PC-9 (cell line): ENCODE measurements at regions of chr7 and their contacts with region 1.

Region 1: DNA sequence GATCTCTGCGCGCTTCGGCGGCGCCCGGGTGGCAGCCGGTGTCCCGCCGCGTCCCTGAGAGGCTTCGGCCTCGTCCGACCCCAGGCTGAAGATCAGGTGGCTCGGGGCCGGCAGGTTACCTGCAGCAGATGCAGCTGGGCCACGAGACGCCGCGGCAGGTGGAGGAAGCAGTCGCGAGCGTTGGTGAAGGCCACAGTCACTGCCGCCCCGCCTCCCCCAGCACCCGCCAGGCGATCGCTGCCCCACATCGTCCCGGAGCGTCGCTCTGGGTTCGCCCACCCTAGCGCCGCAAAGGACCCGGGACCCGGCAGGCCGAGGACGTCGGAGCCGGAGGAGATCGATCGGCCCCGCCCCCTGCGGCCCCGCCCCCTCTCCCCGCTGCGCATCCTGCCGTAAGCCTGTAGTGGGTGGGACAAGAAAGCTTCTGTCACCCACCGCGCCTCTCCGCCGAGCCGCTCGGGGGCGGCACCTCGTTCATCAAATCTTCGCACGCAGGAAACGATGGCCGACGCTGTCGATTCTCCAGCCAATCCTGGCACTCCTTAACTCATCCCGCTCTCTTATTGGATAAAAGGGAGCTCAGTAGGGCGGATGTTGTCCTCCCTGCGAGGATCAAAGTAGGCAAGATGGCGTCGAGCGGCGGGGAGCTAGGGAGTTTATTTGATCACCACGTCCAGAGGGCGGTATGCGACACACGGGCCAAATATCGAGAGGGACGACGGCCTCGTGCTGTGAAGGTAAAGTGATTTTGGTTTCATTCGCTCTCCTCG is at the starts of genes PEX1 and RBM48:
- DNase-seq: peak; percentile 97 to 99
- H3K4me3 ChIP-seq: peak within 1 kb of the TSS; percentile 95
- H3K27ac ChIP-seq: peak within 1 kb of the TSS; percentile 52
- H3K4me1 ChIP-seq: peaks cover 18% of the 10 kb centered on the region
- H3K27me3 ChIP-seq: no peaks in the 10 kb centered on the region
- CTCF ChIP-seq: peak; percentile 50
- total RNA-seq, gene PEX1: 13.4 and 20.2 TPM in 2 replicates
- total RNA-seq, gene RBM48: 7.4 and 11.5 TPM in 2 replicates

Region 2: DNA sequence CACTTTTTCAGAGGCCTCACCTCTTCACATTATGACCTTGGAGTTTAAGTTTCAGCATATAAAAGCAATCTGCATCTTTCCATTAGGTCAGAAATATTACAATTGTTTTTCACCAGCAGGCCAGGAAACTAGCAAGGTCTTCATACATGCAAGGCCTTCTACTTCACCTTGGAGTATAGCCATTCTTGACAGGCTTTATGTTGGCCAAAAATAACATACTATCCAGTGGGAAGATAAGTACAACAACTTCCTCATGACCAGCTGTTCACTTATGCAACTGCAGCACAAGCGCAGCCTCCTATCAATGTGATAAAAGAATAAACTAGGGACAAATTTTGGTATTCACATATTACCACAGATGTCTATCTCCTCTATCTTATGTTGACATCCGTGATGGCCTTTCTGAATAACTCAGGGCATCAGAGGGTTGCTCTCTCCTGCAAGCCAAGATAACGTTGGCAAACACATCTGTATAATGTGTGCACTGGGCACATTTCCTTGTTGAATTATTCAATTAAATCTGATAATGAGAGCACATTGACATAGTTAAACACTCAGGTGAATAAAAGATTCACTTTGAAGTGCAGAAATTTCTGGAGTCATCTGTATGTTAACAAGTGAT is 1024.3 kb before region 1 on chr7:
- CTCF ChIA-PET with region 1: no interaction called
- POLR2A ChIA-PET with region 1: interaction called, 11 read pairs
- intact Hi-C with region 1: no loop called
- DNase-seq: no peak
- H3K4me3 ChIP-seq: no peak overlapping the region
- H3K27ac ChIP-seq: no peak overlapping the region
- H3K4me1 ChIP-seq: no peaks in the 10 kb centered on the region
- H3K27me3 ChIP-seq: no peaks in the 10 kb centered on the region
- CTCF ChIP-seq: no peak

Region 3: GRCh38 chr7:91852263-91852741 is 676.1 kb before region 1 on chr7:
- CTCF ChIA-PET with region 1: no interaction called
- POLR2A ChIA-PET with region 1: no interaction called
- intact Hi-C with region 1: no loop called
- DNase-seq: peak in 1 of 2 experiments; percentile 41
- H3K4me3 ChIP-seq: no peak overlapping the region
- H3K27ac ChIP-seq: no peak overlapping the region
- H3K4me1 ChIP-seq: peaks cover 13% of the 10 kb centered on the region; the same call in 1 of the 2 replicates
- H3K27me3 ChIP-seq: no peaks in the 10 kb centered on the region
- CTCF ChIP-seq: peak; percentile 51

Region 4: GRCh38 chr7:91880413-91881241 is 647.7 kb before region 1 on chr7 and contains the start of gene MTERF1:
- CTCF ChIA-PET with region 1: interaction called, 5 read pairs
- POLR2A ChIA-PET with region 1: no interaction called
- intact Hi-C with region 1: loop called (anchors 1 kb)
- DNase-seq: peak; percentile 76 to 94
- H3K4me3 ChIP-seq: peak within 1 kb of the TSS; percentile 95
- H3K27ac ChIP-seq: 0 out of 2 replicates have a peak within 1 kb of the TSS, but pooled peaks have one; percentile 35
- H3K4me1 ChIP-seq: peaks cover 12% of the 10 kb centered on the region; the same call in 1 of the 2 replicates
- H3K27me3 ChIP-seq: no peaks in the 10 kb centered on the region
- CTCF ChIP-seq: peak; percentile 94
- total RNA-seq, gene MTERF1: 16.9 and 17.5 TPM in 2 replicates

Region 5: DNA sequence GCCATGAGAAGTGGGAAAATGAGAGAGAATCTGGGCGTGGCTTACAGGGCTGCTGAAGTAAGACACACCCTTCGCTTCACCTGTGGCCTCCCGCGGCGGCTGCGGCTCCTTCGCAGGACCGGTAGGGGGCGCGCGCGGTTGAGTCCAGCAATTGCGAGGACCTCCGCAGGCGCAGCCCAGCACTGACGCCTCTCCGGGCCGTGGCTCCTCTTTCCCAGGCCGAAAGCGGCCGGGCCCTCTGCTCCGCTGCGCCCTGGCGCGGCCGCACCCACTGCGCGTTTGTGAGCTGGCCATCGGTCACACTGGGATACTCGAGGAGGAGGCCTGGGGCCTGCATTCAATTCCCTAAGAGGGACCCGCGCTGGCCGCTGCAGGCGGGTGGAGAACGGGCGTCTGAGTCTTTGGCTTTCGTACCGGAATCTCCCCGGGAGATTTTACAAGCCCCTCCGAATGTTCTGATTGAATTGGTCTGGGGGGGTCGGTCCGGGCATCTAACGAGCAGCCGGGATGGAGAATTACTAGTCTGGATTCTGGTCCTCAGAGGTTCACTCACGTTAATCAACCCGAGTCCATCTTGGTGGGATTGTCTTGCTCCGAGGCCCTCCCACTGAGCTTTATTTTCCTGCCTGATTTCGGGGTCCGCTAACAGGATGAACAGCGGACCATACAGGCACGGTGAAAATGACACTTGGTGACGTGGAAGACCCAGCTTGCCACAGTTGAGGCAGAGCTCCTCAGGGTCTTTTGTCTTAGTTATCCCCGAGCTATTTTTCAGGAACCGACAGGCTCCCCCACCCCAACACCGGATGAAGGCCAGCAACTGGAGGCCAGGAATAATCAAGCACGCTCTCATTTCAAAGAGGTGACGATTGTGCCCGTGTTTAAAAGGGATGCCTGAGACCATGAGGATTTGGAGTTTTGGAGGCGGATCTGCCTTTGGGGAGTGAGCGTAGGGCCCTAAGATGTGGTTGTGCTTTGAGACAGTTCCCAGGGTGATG is 349.1 kb before region 1 on chr7 and contains the start of gene LRRD1:
- CTCF ChIA-PET with region 1: no interaction called
- POLR2A ChIA-PET with region 1: no interaction called
- intact Hi-C with region 1: no loop called
- DNase-seq: peak; percentile 60 to 96
- H3K4me3 ChIP-seq: 0 out of 2 replicates have a peak within 1 kb of the TSS, but pooled peaks have one; percentile 24
- H3K27ac ChIP-seq: no peak within 1 kb of the TSS
- H3K4me1 ChIP-seq: 0 out of 2 replicates have a peak, but pooled peaks cover 9% of the 10 kb centered on the region
- H3K27me3 ChIP-seq: no peaks in the 10 kb centered on the region
- CTCF ChIP-seq: peak; percentile 72
- total RNA-seq, gene LRRD1: not detected in 2 replicates

Region 6: GRCh38 chr7:92260248-92260781 is 268.1 kb before region 1 on chr7:
- CTCF ChIA-PET with region 1: interaction called, 14 read pairs
- POLR2A ChIA-PET with region 1: no interaction called
- intact Hi-C with region 1: no loop called
- DNase-seq: peak; percentile 66 to 93
- H3K4me3 ChIP-seq: peak overlapping the region; percentile 36; the same call in 1 of the 2 replicates
- H3K27ac ChIP-seq: peak overlapping the region; percentile 97
- H3K4me1 ChIP-seq: peaks cover 28% of the 10 kb centered on the region
- H3K27me3 ChIP-seq: no peaks in the 10 kb centered on the region
- CTCF ChIP-seq: no peak

Region 7: GRCh38 chr7:92461027-92462003 is 67.1 kb before region 1 on chr7:
- CTCF ChIA-PET with region 1: interaction called, 5 read pairs
- POLR2A ChIA-PET with region 1: no interaction called
- intact Hi-C with region 1: loop called (anchors 5 kb)
- DNase-seq: peak in 1 of 2 experiments; percentile 29
- H3K4me3 ChIP-seq: no peak overlapping the region
- H3K27ac ChIP-seq: no peak overlapping the region
- H3K4me1 ChIP-seq: peaks cover 34% of the 10 kb centered on the region
- H3K27me3 ChIP-seq: no peaks in the 10 kb centered on the region
- CTCF ChIP-seq: peak; percentile 81

Region 8: DNA sequence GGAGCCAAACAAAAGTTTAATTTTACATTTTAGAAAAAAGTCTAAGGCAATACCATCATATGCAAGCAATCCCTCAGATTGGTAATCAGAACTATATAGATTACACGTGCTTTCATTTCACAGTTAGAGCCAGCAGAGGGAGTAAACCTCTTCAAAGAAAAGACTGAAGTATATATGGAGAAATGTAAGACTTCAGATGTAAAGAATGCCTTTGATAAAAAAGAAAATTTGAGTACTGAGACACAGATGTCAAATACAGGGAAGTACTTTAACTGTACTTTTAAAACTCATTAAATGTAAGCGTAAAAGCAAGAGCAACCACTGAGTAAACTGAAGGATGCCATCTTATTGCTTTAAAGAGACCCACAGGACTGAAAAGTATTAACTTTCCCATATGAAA is 163.2 kb after region 1 on chr7:
- CTCF ChIA-PET with region 1: no interaction called
- POLR2A ChIA-PET with region 1: interaction called, 11 read pairs
- intact Hi-C with region 1: no loop called
- DNase-seq: peak; percentile 8 to 66
- H3K4me3 ChIP-seq: no peak overlapping the region
- H3K27ac ChIP-seq: no peak overlapping the region
- H3K4me1 ChIP-seq: peaks cover 6% of the 10 kb centered on the region; the same call in 1 of the 2 replicates
- H3K27me3 ChIP-seq: no peaks in the 10 kb centered on the region
- CTCF ChIP-seq: peak; percentile 80

Region 9: GRCh38 chr7:93231799-93232672 is 703.7 kb after region 1 on chr7 and contains the start of gene VPS50:
- CTCF ChIA-PET with region 1: interaction called, 4 read pairs
- POLR2A ChIA-PET with region 1: no interaction called
- intact Hi-C with region 1: loop called (anchors 5 kb)
- DNase-seq: peak; percentile 95 to 96
- H3K4me3 ChIP-seq: peak within 1 kb of the TSS; percentile 70
- H3K27ac ChIP-seq: peak within 1 kb of the TSS; percentile 86
- H3K4me1 ChIP-seq: peaks cover 14% of the 10 kb centered on the region; the same call in 1 of the 2 replicates
- H3K27me3 ChIP-seq: no peaks in the 10 kb centered on the region
- CTCF ChIP-seq: peak; percentile 21; the same call in 1 of the 2 replicates
- total RNA-seq, gene VPS50: 20.3 and 32.2 TPM in 2 replicates